Activated naive CD4-positive, alpha-beta T cell treated with anti-CD3 and anti-CD28 coated beads for 36 hours (primary cell): ENCODE measurements at regions of chr1 and their contacts with region 1.

Region 1: GRCh38 chr1:54287176-54287650 is 87.2 kb downstream of the MRPL37 start:
- DNase-seq: peak; percentile 92
- H3K4me3 Mint-ChIP-seq: peak overlapping the region; percentile 69
- H3K27ac Mint-ChIP-seq: peak overlapping the region; percentile 86
- H3K4me1 Mint-ChIP-seq: peaks cover 92% of the 10 kb centered on the region
- H3K27me3 Mint-ChIP-seq: no peaks in the 10 kb centered on the region

Region 2: GRCh38 chr1:54199765-54200518 is 87.3 kb before region 1 on chr1 and contains the starts of genes CYB5RL and MRPL37:
- CTCF ChIA-PET with region 1: no interaction called
- intact Hi-C with region 1: loop called (anchors 1 kb)
- DNase-seq: peak; percentile 96
- H3K4me3 Mint-ChIP-seq: peak within 1 kb of the TSS; percentile 92
- H3K27ac Mint-ChIP-seq: peak within 1 kb of the TSS; percentile 59
- H3K4me1 Mint-ChIP-seq: peaks cover 32% of the 10 kb centered on the region
- H3K27me3 Mint-ChIP-seq: no peaks in the 10 kb centered on the region
- total RNA-seq, gene CYB5RL: 12.7 to 13.6 TPM
- total RNA-seq, gene MRPL37: 203 to 211 TPM

Region 3: GRCh38 chr1:54310439-54311328 is 23.5 kb after region 1 on chr1:
- CTCF ChIA-PET with region 1: interaction called, 3 read pairs
- intact Hi-C with region 1: loop called (anchors 2 kb)
- DNase-seq: peak; percentile 46
- H3K4me3 Mint-ChIP-seq: no peak overlapping the region
- H3K27ac Mint-ChIP-seq: peak overlapping the region; percentile 62
- H3K4me1 Mint-ChIP-seq: peaks cover 68% of the 10 kb centered on the region
- H3K27me3 Mint-ChIP-seq: no peaks in the 10 kb centered on the region

Region 4: DNA sequence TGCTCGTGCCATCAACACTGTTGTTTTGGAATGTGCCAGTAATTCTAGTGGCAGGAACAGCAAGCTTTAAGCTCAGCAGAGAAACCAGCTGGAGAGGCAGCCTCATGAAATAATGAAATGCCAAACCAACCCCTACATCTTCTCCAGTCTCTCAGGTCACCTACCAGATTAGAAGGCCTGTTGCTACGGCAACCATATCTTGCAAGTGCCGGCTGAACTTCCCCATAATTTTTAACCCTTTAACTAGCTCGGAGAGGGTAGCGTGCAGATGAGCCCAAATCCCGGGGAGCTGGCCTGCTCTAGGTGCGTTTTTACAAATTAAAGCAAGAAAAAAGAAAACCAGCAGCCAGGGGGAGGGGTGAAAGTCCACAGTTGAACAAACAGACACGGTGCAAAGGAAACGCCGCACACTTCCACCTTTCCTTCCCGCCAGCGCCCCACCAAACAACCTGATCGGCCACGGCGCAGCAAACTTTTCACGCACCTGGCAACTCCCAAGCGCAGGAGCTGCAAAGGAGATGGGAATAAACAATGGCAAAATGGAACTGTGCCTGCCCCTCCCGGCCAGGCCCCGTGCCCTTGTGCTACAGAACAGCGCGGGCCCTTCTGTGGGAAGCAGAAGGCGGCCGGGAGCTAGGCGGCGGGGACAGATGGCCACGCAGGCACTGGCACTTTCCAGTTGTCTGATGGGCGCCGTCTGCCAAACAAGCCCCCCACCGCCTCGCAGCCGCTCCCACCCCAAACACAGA is 68.9 kb after region 1 on chr1:
- CTCF ChIA-PET with region 1: interaction called, 5 read pairs
- intact Hi-C with region 1: loop called (anchors 1 kb)
- DNase-seq: peak; percentile 56
- H3K4me3 Mint-ChIP-seq: peak overlapping the region; percentile 80
- H3K27ac Mint-ChIP-seq: peak overlapping the region; percentile 88
- H3K4me1 Mint-ChIP-seq: peaks cover 91% of the 10 kb centered on the region
- H3K27me3 Mint-ChIP-seq: no peaks in the 10 kb centered on the region

Region 5: DNA sequence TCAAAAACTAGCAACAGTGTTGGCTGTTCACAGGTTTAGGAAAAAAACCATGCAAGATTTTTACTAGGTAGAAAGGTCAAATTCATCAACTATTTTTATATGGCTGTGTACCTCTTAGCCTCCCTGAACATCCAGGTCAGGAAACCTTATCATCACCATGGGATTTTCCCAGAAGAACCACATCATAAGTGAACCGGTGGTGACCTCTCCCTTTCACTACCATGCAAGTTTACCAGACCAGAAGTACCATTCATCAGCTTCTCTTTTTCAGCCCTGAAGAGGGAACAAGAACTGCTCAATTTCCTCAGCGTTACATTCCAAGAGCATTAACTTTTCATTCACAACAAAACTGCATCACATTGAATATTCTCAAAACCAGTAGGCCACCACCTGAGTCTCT is 113.1 kb after region 1 on chr1:
- CTCF ChIA-PET with region 1: no interaction called
- intact Hi-C with region 1: loop called (anchors 1 kb)
- DNase-seq: peak; percentile 78
- H3K4me3 Mint-ChIP-seq: peak overlapping the region; percentile 36
- H3K27ac Mint-ChIP-seq: peak overlapping the region; percentile 68
- H3K4me1 Mint-ChIP-seq: peaks cover 74% of the 10 kb centered on the region
- H3K27me3 Mint-ChIP-seq: no peaks in the 10 kb centered on the region

Region 6: GRCh38 chr1:54764133-54764921 is 477.1 kb after region 1 on chr1 and contains the start of gene PARS2:
- CTCF ChIA-PET with region 1: no interaction called
- intact Hi-C with region 1: loop called (anchors 1 kb)
- DNase-seq: peak; percentile 96
- H3K4me3 Mint-ChIP-seq: peak within 1 kb of the TSS; percentile 94
- H3K27ac Mint-ChIP-seq: peak within 1 kb of the TSS; percentile 83
- H3K4me1 Mint-ChIP-seq: peaks cover 19% of the 10 kb centered on the region
- H3K27me3 Mint-ChIP-seq: no peaks in the 10 kb centered on the region
- total RNA-seq, gene PARS2: 3.0 to 3.1 TPM